Endothelial cell of umbilical vein (primary cell): ENCODE measurements at regions of chr4 and their contacts with region 1.

Region 1: GRCh38 chr4:121764707-121765593 is at the start of gene SMIM43:
- DNase-seq: peak; percentile 13
- H3K4me3 ChIP-seq: peak within 1 kb of the TSS; percentile 51 to 54 (median 52)
- H3K27ac ChIP-seq: no peak within 1 kb of the TSS
- H3K4me1 ChIP-seq: peaks cover 5% of the 10 kb centered on the region
- H3K27me3 ChIP-seq: peaks cover 28 to 35% of the 10 kb centered on the region in 2 experiments
- CTCF ChIP-seq: no peak
- POLR2A ChIP-seq: no peak
- total RNA-seq, gene SMIM43: not detected in 2 replicates

Region 2: DNA sequence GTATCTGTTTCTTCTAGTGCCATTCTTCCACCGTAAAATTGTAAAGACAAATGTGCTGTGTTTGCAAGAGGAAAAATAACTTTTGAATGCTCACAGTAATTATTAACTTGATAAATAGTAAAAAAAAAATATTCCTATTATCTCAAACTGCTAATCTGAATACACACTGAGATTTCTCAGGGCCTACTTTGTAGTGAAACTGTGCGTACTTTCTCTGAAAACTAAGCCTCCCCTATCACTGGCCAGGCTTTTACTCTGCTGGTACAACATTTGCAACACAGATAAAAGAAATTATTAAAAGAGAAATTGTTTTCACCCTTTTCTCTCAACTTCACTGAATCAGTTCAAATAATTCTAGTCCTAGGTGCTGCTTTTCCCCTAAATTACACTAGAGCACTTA is 979.7 kb before region 1 on chr4:
- CTCF ChIA-PET with region 1: no interaction called
- POLR2A ChIA-PET with region 1: no interaction called
- dilution Hi-C with region 1: no loop called
- intact Hi-C with region 1: no loop called
- DNase-seq: no peak
- H3K4me3 ChIP-seq: no peak overlapping the region
- H3K27ac ChIP-seq: no peak overlapping the region
- H3K4me1 ChIP-seq: no peaks in the 10 kb centered on the region
- H3K27me3 ChIP-seq: no peaks in the 10 kb centered on the region
- CTCF ChIP-seq: no peak
- POLR2A ChIP-seq: no peak

Region 3: GRCh38 chr4:121789960-121790829 is 25.2 kb after region 1 on chr4:
- CTCF ChIA-PET with region 1: interaction called, 10 read pairs
- POLR2A ChIA-PET with region 1: no interaction called
- dilution Hi-C with region 1: no loop called
- intact Hi-C with region 1: no loop called
- DNase-seq: peak; percentile 84
- H3K4me3 ChIP-seq: peak overlapping the region in 1 of 3 experiments; percentile 29
- H3K27ac ChIP-seq: peak overlapping the region; percentile 64
- H3K4me1 ChIP-seq: peaks cover 20% of the 10 kb centered on the region
- H3K27me3 ChIP-seq: no peaks in the 10 kb centered on the region
- CTCF ChIP-seq: no peak
- POLR2A ChIP-seq: no peak